ENCODE measurements at regions of chr10 and their contacts with region 1.

Region 1: DNA sequence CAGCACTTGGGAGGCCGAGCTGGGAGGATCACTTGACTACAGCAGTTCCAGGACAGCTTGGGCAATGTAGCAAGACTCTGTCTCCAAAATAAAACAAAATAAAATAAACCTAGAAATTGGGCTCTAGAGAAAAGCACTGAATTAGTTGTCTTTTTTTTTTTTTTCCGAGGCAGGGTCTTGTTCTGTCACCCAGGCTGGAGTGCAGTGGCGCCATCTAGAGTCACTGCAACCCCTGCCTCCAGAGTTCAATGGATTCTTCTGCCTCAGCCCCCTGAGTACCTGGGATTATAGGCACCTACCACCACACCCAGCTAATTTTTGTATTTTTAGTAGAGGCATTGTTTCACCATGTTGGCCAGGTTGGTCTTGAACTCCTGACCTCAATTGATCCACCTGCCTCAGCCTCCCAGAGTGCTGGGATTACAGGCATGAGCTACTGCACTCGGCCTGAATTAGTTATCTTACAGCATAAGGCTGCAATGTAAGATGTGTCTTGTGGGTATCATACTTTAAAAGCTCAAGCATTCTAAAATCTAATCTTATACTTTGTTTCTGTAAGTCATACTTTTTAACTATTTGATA is 12.8 kb downstream of the MEIG1 start:
- DNase-seq: peak in 1 of 2 experiments; percentile 63
- H3K4me3 ChIP-seq: no peak overlapping the region
- H3K27ac ChIP-seq: no peak overlapping the region
- H3K4me1 ChIP-seq: no peaks in the 10 kb centered on the region
- H3K27me3 ChIP-seq: no peaks in the 10 kb centered on the region; a peak in 2 of 7 replicates
- CTCF ChIP-seq: peak; percentile 54 to 56 (median 54)
- EP300 ChIP-seq: no peak
- POLR2A ChIP-seq: no peak
- RAD21 ChIP-seq: peak; percentile 60 to 70

Region 2: GRCh38 chr10:14954001-14954770 is 17.8 kb before region 1 on chr10 and contains the start of gene DCLRE1C:
- CTCF ChIA-PET with region 1: interaction called, 24 read pairs
- POLR2A ChIA-PET with region 1: interaction called, 8 read pairs
- DNase-seq: peak in 1 of 2 experiments; percentile 90
- H3K4me3 ChIP-seq: peak within 1 kb of the TSS; percentile 51 to 69 (median 57)
- H3K27ac ChIP-seq: 0 out of 2 replicates have a peak within 1 kb of the TSS, but pooled peaks have one; percentile 50
- H3K4me1 ChIP-seq: peaks cover 0 to 12% (median 7%) of the 10 kb centered on the region in 4 experiments; a peak in 6 of 7 replicates
- H3K27me3 ChIP-seq: peaks cover 0 to 8% (median 3%) of the 10 kb centered on the region in 4 experiments; a peak in 4 of 7 replicates
- CTCF ChIP-seq: no peak
- EP300 ChIP-seq: no peak
- POLR2A ChIP-seq: peak in 1 of 2 experiments; percentile 88; a peak in 2 of 3 replicates
- RAD21 ChIP-seq: no peak
- total RNA-seq, gene DCLRE1C: 5.6 and 7.4 TPM in 2 replicates

Region 3: GRCh38 chr10:14959276-14960057 is 12.5 kb before region 1 on chr10 and contains the start of gene MEIG1:
- CTCF ChIA-PET with region 1: interaction called, 24 read pairs
- POLR2A ChIA-PET with region 1: interaction called, 8 read pairs
- DNase-seq: peak in 1 of 2 experiments; percentile 100
- H3K4me3 ChIP-seq: peak within 1 kb of the TSS; percentile 71 to 87 (median 85)
- H3K27ac ChIP-seq: peak within 1 kb of the TSS; percentile 64; the same call in 1 of the 2 replicates
- H3K4me1 ChIP-seq: no peaks in the 10 kb centered on the region; a peak in 1 of 7 replicates
- H3K27me3 ChIP-seq: peaks cover 1 to 21% (median 10%) of the 10 kb centered on the region in 4 experiments; a peak in 6 of 7 replicates
- CTCF ChIP-seq: no peak
- EP300 ChIP-seq: peak in 1 of 2 experiments; percentile 7; a peak in 1 of 3 replicates
- POLR2A ChIP-seq: no peak
- RAD21 ChIP-seq: no peak
- total RNA-seq, gene MEIG1: not detected in 2 replicates

Region 4: GRCh38 chr10:14982744-14983143 is 10.8 kb after region 1 on chr10:
- CTCF ChIA-PET with region 1: interaction called, 16 read pairs
- POLR2A ChIA-PET with region 1: no interaction called
- DNase-seq: no peak
- H3K4me3 ChIP-seq: no peak overlapping the region
- H3K27ac ChIP-seq: no peak overlapping the region
- H3K4me1 ChIP-seq: no peaks in the 10 kb centered on the region
- H3K27me3 ChIP-seq: no peaks in the 10 kb centered on the region
- CTCF ChIP-seq: no peak
- EP300 ChIP-seq: no peak
- POLR2A ChIP-seq: no peak
- RAD21 ChIP-seq: no peak